Activated naive CD4-positive, alpha-beta T cell treated with anti-CD3 and anti-CD28 coated beads for 36 hours (primary cell): ENCODE measurements at regions of chr10 and their contacts with region 1.

Region 1: DNA sequence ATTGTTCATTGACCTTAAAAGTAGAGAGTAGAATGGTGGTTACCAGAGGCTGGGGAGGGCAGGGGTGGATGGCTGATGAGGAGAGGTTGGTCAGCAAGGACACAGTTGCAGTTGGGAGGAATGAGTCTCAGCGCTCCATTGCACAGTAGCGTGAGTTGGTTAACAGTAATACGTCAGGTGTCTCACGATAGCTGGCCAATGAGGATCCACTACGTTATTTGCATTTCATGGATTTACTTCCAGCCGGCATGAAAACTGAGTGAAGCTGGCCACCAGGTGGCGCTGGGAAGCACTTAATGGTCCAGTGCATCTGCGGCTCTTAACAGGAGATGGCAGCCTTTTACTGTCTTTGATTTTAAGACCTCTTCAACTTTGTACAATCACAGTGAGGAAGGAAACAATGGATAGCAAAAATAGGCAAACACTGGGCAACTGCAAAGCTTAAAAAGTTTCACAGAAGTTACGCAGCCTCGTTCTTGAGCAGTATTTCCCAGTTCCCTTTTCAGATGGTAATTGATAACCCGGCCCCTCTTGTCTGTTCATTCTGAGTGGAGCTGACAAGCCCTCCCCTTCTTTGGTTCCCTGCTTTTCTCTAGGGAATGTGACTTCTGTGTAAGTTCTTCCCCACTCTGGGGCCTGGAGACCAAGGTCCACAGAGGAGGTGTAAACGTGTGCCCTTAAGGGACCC is 23.7 kb downstream of the AKR1E2 start:
- DNase-seq: peak; percentile 95
- H3K4me3 Mint-ChIP-seq: peak overlapping the region; percentile 22
- H3K27ac Mint-ChIP-seq: peak overlapping the region; percentile 37
- H3K4me1 Mint-ChIP-seq: peaks cover 6% of the 10 kb centered on the region
- H3K27me3 Mint-ChIP-seq: no peaks in the 10 kb centered on the region

Region 2: DNA sequence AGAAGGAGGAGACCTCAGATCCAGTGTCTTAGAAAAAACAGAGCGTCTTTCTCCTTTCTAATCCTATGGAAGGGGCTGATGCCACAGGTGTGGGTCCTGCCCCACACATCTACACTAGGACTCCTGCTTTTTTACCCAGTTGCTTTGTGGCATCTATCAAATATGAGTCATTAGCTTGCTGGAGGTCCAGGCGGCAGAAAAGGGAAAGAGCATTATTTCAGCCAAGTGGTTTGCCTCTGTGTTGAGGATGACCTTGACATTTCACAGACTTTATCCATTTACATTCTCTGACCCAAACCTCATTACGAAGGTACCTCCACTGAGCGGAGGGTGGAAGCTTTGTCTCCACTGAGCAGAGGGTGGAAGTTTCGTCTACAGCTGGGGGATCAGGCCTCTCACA is 756.3 kb before region 1 on chr10:
- CTCF ChIA-PET with region 1: no interaction called
- intact Hi-C with region 1: no loop called
- DNase-seq: no peak
- H3K4me3 Mint-ChIP-seq: no peak overlapping the region
- H3K27ac Mint-ChIP-seq: no peak overlapping the region
- H3K4me1 Mint-ChIP-seq: no peaks in the 10 kb centered on the region
- H3K27me3 Mint-ChIP-seq: no peaks in the 10 kb centered on the region

Region 3: GRCh38 chr10:4512671-4513240 is 336.9 kb before region 1 on chr10:
- CTCF ChIA-PET with region 1: no interaction called
- intact Hi-C with region 1: no loop called
- DNase-seq: peak; percentile 41
- H3K4me3 Mint-ChIP-seq: no peak overlapping the region
- H3K27ac Mint-ChIP-seq: no peak overlapping the region
- H3K4me1 Mint-ChIP-seq: peaks cover 9% of the 10 kb centered on the region
- H3K27me3 Mint-ChIP-seq: peaks cover 20% of the 10 kb centered on the region

Region 4: DNA sequence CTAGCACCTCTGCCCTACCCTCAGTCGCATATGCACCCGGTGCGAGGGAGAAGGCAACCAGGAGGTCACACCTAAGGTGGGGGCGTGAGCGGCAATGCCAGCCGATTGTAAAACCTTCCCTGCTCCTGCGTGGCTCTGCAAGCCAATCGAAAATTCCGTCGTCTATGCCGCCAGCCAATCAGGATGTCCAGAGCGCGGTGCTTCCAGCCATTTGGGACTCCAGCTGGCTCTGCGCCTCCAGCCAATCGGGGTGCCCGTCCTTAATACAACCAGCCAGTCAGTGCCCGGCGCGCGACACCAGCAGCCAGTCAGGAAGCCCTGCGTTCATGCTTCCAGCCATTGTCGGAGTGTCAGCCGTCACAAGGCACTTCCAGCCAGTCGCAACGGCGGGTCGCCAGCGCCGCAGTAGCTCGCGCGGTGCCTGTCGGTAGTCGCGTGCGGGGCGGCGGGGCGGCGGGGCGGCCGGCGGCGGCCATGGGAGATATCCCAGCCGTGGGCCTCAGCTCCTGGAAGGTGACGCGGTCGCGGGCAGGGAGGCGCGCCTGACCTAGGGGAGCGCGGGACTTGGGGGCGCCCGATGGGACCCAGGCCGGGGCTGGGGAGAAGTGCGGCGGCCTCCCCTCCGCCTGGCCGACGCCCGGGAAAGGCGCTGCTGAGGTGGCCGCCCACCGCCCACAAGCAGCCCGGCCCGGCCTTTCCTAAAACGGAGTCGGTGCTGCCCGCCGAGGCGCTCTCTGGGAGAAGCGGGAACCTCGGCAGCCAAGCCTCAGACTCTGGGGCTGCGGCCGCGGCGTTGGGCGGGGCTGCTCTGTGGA is 23.6 kb before region 1 on chr10 and contains the start of gene AKR1E2:
- CTCF ChIA-PET with region 1: interaction called, 9 read pairs
- intact Hi-C with region 1: loop called (anchors 1 kb)
- DNase-seq: peak; percentile 87
- H3K4me3 Mint-ChIP-seq: peak within 1 kb of the TSS; percentile 73
- H3K27ac Mint-ChIP-seq: peak within 1 kb of the TSS; percentile 33
- H3K4me1 Mint-ChIP-seq: peaks cover 21% of the 10 kb centered on the region
- H3K27me3 Mint-ChIP-seq: no peaks in the 10 kb centered on the region
- total RNA-seq, gene AKR1E2: 7.1 to 7.3 TPM

Region 5: GRCh38 chr10:4981722-4982471 is 132.2 kb after region 1 on chr10:
- CTCF ChIA-PET with region 1: interaction called, 50 read pairs
- intact Hi-C with region 1: loop called (anchors 1 kb)
- DNase-seq: peak; percentile 8
- H3K4me3 Mint-ChIP-seq: no peak overlapping the region
- H3K27ac Mint-ChIP-seq: no peak overlapping the region
- H3K4me1 Mint-ChIP-seq: no peaks in the 10 kb centered on the region
- H3K27me3 Mint-ChIP-seq: peaks cover 5% of the 10 kb centered on the region

Region 6: DNA sequence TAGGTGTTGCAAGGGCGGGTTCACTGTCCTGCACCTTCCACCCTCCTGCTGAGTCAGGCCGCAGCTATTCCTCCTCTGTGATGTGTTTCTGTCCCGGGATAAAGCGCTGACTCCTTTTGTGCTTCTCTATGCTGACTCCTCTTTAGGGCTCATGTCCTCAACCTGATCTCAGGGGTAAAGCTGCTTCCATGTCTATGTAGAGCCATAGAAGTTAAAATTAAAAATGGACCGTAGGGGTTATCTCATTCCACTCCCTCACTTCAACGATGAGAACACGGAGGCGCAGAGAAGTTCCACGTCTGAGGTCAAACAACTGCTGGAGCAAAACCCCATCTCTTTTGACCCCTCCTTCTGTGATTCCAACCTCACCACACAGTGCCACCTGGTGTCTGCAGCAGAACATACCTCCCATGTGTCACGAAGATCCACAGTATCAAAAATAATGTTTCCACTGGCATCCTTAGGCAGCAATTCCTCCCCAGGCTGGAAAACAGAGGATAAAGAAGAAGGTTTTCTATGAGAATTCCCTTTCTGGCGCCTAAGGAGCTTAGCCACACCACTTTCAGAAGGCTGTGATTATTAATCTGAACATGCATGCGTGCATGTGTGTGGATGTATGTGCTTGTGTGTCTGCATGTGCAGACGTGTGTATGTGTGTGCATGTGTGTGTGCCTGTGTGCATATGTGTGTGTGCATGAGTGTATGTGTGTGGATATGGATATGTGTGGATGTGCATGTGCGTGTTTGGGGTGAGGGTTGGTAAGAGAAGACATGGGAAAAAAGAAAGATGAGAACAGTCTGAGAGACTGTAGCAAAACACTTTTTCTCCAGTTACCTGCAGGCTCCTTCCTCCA is 433.8 kb after region 1 on chr10:
- CTCF ChIA-PET with region 1: interaction called, 54 read pairs
- intact Hi-C with region 1: loop called (anchors 1 kb)
- DNase-seq: peak; percentile 83
- H3K4me3 Mint-ChIP-seq: no peak overlapping the region
- H3K27ac Mint-ChIP-seq: peak overlapping the region; percentile 72
- H3K4me1 Mint-ChIP-seq: peaks cover 38% of the 10 kb centered on the region
- H3K27me3 Mint-ChIP-seq: no peaks in the 10 kb centered on the region

Region 7: DNA sequence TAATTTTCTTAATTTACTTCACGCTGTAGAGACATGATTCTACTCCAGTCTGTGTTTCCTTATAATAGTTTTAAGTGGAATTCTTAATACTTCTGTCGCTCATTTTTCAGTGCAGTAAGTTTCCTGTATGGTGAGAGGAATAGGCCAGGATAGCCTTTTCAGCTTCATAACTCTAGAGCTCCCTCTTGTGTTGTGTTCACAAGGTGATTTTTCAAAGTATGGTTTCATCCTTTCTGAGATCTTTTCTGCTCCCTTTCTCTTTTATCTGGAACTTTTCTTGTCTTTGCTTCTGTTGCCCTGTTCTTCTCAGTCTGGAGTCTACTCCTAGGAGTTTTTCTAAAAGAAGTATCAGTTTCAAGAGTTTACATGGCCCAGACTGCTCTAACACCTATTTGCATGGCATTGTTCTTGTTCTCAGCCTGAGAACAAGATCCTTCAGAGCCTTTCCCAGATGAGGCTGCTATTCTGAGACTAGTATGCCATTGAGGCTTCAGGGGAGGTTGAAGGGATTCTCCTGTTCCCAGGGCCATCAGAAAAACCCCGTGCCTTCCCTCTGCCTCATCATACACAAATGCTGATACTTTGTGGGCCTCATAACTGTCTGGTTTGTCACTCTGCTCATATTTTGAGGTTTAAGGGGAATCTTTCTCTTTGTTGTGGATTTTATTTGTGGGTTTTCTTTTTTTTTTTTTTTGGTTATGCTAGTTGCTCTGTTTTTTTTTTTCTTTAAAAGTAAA is 584.5 kb after region 1 on chr10:
- CTCF ChIA-PET with region 1: interaction called, 27 read pairs
- intact Hi-C with region 1: loop called (anchors 1 kb)
- DNase-seq: no peak
- H3K4me3 Mint-ChIP-seq: no peak overlapping the region
- H3K27ac Mint-ChIP-seq: no peak overlapping the region
- H3K4me1 Mint-ChIP-seq: peaks cover 8% of the 10 kb centered on the region
- H3K27me3 Mint-ChIP-seq: no peaks in the 10 kb centered on the region

Region 8: DNA sequence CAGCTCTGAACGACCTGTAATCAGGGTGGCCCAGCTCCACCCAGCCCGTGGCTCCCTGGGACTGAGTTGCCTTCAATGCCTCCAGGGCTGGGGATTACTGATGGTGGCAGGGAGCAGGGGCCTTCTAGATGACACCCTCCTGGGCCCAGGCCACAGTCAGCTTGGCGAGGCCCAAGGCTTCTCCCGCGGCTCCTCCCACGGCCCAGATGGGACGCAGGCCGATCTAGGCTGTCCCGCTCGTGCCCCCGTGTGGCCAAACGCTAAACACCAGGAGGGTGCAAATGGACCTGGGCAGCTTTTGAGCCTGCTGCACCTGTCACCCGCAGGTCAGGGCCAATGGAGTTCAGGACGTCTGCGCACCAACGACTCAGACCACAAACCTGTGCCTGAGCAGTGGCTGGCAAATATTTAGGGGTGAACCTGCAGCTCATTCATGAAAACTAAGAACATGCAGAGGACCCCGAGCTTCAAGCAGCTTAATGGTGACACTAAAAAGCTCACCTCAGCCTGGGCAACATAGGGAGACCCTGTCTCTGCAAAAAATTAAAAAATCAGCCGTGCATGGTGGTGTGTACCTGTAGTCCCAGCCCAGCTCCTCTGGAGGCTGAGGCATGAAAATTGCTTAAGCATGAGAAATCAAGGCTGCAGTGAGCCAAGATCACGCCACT is 773.5 kb after region 1 on chr10:
- CTCF ChIA-PET with region 1: interaction called, 23 read pairs
- intact Hi-C with region 1: loop called (anchors 2 kb)
- DNase-seq: peak; percentile 91
- H3K4me3 Mint-ChIP-seq: no peak overlapping the region
- H3K27ac Mint-ChIP-seq: no peak overlapping the region
- H3K4me1 Mint-ChIP-seq: peaks cover 13% of the 10 kb centered on the region
- H3K27me3 Mint-ChIP-seq: no peaks in the 10 kb centered on the region